ENCODE measurements at regions of chr12 and their contacts with region 1.

Region 1: GRCh38 chr12:39272871-39273770 is 169.8 kb downstream of the KIF21A start:
- DNase-seq: peak; percentile 28
- H3K4me3 ChIP-seq: no peak overlapping the region; a peak in 1 of 4 replicates
- H3K27ac ChIP-seq: no peak overlapping the region
- H3K4me1 ChIP-seq: no peaks in the 10 kb centered on the region; a peak in 2 of 4 replicates
- H3K27me3 ChIP-seq: no peaks in the 10 kb centered on the region
- CTCF ChIP-seq: peak; percentile 74
- EP300 ChIP-seq: peak in 1 of 2 experiments; percentile 33; a peak in 1 of 4 replicates
- RAD21 ChIP-seq: peak; percentile 87

Region 2: DNA sequence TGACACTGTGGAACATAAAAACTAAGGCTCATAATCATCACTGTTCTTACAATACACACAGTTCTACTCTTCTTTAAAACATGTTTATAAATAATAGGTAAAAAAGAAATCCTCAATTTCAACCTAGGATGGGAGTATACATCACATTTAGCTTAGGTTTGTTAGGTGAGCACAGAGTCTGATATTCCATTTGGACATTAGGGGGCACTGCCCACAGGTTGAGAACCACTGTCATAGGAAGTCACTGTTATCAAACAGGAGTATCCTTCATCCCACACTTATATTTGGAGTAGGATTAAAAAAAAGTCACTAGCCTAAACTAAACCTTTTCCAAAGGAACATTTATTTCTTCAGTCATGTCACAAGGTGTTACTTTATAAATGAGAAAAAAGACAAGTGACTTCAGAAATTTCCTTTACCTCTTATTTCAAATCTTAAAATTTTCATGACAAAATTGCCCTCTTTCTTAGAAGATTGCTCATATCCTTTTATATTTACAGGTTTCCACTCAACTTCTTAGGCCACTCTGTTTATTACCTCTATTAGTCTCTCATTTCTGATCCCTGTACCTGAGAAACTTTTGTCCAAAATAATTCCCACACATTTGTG is 608.4 kb before region 1 on chr12:
- CTCF ChIA-PET with region 1: interaction called, 10 read pairs
- POLR2A ChIA-PET with region 1: no interaction called
- DNase-seq: peak; percentile 26
- H3K4me3 ChIP-seq: peak overlapping the region in 1 of 2 experiments; percentile 35; a peak in 1 of 4 replicates
- H3K27ac ChIP-seq: peak overlapping the region in 1 of 2 experiments; percentile 64; a peak in 2 of 4 replicates
- H3K4me1 ChIP-seq: no peaks in the 10 kb centered on the region; a peak in 2 of 4 replicates
- H3K27me3 ChIP-seq: no peaks in the 10 kb centered on the region
- CTCF ChIP-seq: peak; percentile 55
- EP300 ChIP-seq: no peak
- RAD21 ChIP-seq: peak; percentile 60

Region 3: DNA sequence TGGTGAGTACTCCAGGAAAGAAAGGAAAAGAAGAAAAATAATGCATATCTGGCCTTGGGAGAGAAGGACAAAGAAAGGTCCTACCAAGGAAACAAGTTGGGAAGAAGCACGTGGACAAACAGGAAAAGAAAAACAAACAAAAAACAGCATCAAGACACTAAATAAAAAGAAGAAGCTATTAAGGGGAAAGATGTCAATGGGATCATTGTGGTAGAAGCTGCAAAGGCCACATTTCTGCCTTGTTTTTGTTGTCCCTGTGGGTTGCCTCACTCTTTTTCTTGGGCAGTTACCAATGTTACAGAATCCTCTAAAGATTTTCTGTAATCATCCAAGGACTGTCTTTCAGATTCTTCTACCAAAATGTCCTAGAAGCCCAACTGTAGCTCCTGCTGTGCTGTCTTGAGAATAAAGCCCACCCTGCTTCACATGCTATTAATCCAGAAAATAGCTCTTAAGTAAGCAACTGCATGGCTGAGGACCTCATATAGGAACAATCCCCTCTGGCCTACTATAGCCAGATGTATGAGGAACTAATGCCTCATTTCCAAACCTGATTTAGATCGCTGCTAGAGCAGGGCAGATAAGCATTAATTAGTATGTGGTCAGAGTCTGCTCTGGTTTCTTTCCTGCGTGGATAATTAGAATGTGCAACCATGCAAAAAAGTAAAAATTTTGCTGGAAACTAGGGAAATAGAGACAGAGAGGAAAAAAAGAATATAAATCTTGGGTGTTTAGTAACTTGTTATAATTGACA is 357.5 kb before region 1 on chr12:
- CTCF ChIA-PET with region 1: interaction called, 20 read pairs
- POLR2A ChIA-PET with region 1: no interaction called
- DNase-seq: peak; percentile 61
- H3K4me3 ChIP-seq: no peak overlapping the region
- H3K27ac ChIP-seq: peak overlapping the region in 1 of 2 experiments; percentile 78; a peak in 2 of 4 replicates
- H3K4me1 ChIP-seq: peaks cover 0 to 9% of the 10 kb centered on the region in 2 experiments; a peak in 1 of 4 replicates
- H3K27me3 ChIP-seq: no peaks in the 10 kb centered on the region
- CTCF ChIP-seq: no peak
- EP300 ChIP-seq: peak in 1 of 2 experiments; percentile 85; a peak in 2 of 4 replicates
- RAD21 ChIP-seq: no peak; the same call in 1 of the 2 replicates

Region 4: DNA sequence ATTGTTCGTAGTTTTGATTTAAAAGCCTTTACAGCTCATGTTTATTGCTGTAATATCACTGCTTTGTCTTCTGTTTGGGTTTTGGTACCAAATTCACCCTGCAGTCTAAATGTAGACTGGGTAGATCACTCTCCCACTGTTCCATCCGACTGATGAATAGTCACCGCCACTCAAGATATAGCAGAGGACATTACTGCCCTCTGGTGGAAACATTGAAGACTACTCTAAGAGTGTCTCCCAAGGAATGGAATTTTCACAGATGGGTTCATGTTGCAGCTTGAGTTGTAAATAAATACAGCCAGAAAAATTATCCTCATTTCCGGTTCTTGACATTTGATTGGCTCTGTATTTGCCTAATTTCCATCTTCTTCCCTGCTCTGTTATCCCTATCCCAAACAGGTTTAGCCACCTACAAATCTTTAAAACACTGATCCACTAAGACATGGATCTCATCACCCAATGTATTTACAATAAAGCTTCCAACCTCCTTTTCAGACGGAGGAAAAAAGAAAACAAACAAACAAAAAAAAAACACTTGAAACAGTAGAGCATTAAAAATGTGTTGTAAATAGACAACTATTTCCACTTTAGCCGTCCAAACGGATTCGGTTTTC is 169.5 kb before region 1 on chr12:
- CTCF ChIA-PET with region 1: interaction called, 38 read pairs
- POLR2A ChIA-PET with region 1: no interaction called
- DNase-seq: peak; percentile 67
- H3K4me3 ChIP-seq: no peak overlapping the region; a peak in 1 of 4 replicates
- H3K27ac ChIP-seq: no peak overlapping the region; a peak in 1 of 4 replicates
- H3K4me1 ChIP-seq: no peaks in the 10 kb centered on the region
- H3K27me3 ChIP-seq: no peaks in the 10 kb centered on the region
- CTCF ChIP-seq: peak; percentile 81
- EP300 ChIP-seq: no peak
- RAD21 ChIP-seq: peak; percentile 97

Region 5: GRCh38 chr12:39294715-39295114 is 21.6 kb after region 1 on chr12:
- CTCF ChIA-PET with region 1: interaction called, 34 read pairs
- POLR2A ChIA-PET with region 1: no interaction called
- DNase-seq: peak; percentile 36
- H3K4me3 ChIP-seq: no peak overlapping the region
- H3K27ac ChIP-seq: peak overlapping the region in 1 of 2 experiments; percentile 76; a peak in 2 of 4 replicates
- H3K4me1 ChIP-seq: peaks cover 0 to 11% of the 10 kb centered on the region in 2 experiments; a peak in 2 of 4 replicates
- H3K27me3 ChIP-seq: no peaks in the 10 kb centered on the region
- CTCF ChIP-seq: no peak
- EP300 ChIP-seq: peak in 1 of 2 experiments; percentile 12; a peak in 1 of 4 replicates
- RAD21 ChIP-seq: 0 out of 2 replicates have a peak, but pooled peaks have one; percentile 1